A549 (cell line): ENCODE measurements at regions of chr7 and their contacts with region 1.

Region 1: DNA sequence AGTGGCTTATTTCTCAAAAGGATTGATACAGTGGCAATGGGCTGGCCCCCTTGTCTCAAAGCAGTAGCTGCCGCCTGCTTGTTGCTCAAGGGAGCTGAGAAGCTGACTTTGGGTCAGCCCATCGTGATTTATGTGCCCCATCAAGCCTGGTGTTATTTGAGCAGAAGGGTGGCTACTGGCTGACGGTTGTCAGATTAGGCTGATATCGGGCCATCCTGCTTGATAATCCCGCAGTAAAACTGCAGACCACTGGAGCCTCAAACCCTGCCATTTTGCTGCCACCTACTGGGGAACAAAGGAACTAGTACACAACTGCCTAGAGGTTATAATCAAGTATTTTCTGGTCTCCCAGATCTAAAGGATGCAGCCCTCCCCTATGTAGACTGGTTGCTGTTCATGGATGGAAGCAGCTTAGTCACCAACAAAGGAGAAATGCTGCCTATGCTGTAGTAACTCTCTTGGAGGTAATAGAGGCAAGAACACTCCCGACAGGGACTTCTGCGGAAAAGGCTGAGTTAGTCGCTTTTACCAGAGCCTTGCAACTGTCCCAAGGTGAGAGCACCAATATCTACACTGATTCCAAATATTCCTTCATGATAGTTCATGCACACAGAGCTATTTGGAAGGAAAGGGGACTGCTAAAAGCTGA is 65.9 kb upstream of the ZNF92 start:
- DNase-seq: peak; percentile 49 to 67
- ATAC-seq: peak; percentile 83 to 97
- H3K4me3 ChIP-seq: no peak overlapping the region
- H3K27ac ChIP-seq: no peak overlapping the region
- H3K4me1 ChIP-seq: no peaks in the 10 kb centered on the region
- CTCF ChIP-seq: peak; percentile 84
- EP300 ChIP-seq: no peak
- POLR2A ChIP-seq: no peak
- RAD21 ChIP-seq: peak; percentile 87 to 93

Region 2: DNA sequence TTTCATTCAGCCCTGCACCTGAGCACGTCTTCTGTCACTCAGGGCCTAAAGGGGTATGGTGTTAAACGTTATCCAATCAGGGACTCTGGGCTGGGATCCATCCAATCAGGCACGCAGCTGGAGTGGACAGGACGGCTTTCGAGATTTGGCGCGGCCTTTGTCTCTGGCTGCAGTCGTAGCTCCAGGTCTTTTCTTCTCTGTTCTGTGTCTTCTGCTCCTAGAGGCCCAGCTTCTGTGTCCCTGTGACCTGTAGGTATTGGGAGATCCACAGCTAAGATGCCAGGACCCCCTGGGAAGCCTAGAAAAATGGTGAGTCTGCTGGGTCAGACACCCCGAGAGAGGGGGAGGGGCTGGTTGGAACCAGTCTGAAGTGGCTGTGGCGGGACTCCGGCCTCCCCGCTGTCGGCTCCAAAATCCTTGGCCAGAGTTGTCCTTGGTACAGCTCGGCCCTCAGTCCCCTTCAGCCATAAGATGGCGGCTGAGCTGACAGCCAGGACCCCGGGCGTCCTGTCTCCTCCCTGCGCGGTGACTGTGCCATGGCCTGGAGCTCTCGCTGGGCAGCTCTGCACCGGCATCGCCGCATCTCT is 733.1 kb before region 1 on chr7:
- CTCF ChIA-PET with region 1: no interaction called
- POLR2A ChIA-PET with region 1: no interaction called
- DNase-seq: no peak
- ATAC-seq: no peak
- H3K4me3 ChIP-seq: no peak overlapping the region
- H3K27ac ChIP-seq: no peak overlapping the region
- H3K4me1 ChIP-seq: no peaks in the 10 kb centered on the region
- CTCF ChIP-seq: no peak
- EP300 ChIP-seq: no peak
- POLR2A ChIP-seq: no peak
- RAD21 ChIP-seq: no peak

Region 3: DNA sequence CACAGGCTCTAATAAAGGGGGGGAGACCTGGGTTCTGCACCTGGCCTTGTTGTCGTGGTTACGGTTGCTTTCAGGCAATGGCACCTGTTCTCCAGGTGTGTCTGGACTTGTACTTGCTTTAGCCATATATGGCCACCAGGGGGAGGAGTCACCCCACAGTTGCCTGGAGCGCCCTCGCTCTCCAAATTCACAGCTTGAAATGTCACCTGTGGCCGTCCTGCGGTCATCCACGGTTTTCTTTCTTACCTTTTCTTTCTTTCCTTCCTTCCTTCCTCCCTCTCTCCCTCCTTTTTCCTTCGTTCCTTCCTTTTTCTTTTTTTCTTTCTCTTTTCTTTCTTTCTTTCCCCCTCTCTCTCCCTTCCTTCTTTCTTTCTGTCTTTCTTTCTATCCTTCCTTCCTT is 91.3 kb before region 1 on chr7:
- CTCF ChIA-PET with region 1: interaction called, 20 read pairs
- POLR2A ChIA-PET with region 1: no interaction called
- DNase-seq: peak in 1 of 2 experiments; percentile 64
- ATAC-seq: peak; percentile 58 to 86; a peak in 4 of 6 replicates
- H3K4me3 ChIP-seq: no peak overlapping the region
- H3K27ac ChIP-seq: no peak overlapping the region
- H3K4me1 ChIP-seq: no peaks in the 10 kb centered on the region
- CTCF ChIP-seq: peak; percentile 71
- EP300 ChIP-seq: no peak
- POLR2A ChIP-seq: no peak
- RAD21 ChIP-seq: peak; percentile 87 to 91

Region 4: GRCh38 chr7:65250697-65251395 is 56.9 kb before region 1 on chr7:
- CTCF ChIA-PET with region 1: interaction called, 10 read pairs
- POLR2A ChIA-PET with region 1: no interaction called
- DNase-seq: no peak
- ATAC-seq: no peak
- H3K4me3 ChIP-seq: no peak overlapping the region
- H3K27ac ChIP-seq: no peak overlapping the region
- H3K4me1 ChIP-seq: no peaks in the 10 kb centered on the region
- CTCF ChIP-seq: no peak
- EP300 ChIP-seq: no peak
- POLR2A ChIP-seq: no peak
- RAD21 ChIP-seq: no peak

Region 5: GRCh38 chr7:65325793-65326432 is 18.1 kb after region 1 on chr7:
- CTCF ChIA-PET with region 1: interaction called, 14 read pairs
- POLR2A ChIA-PET with region 1: no interaction called
- DNase-seq: no peak
- ATAC-seq: no peak
- H3K4me3 ChIP-seq: no peak overlapping the region
- H3K27ac ChIP-seq: no peak overlapping the region
- H3K4me1 ChIP-seq: no peaks in the 10 kb centered on the region
- CTCF ChIP-seq: no peak
- EP300 ChIP-seq: no peak
- POLR2A ChIP-seq: no peak
- RAD21 ChIP-seq: no peak

Region 6: DNA sequence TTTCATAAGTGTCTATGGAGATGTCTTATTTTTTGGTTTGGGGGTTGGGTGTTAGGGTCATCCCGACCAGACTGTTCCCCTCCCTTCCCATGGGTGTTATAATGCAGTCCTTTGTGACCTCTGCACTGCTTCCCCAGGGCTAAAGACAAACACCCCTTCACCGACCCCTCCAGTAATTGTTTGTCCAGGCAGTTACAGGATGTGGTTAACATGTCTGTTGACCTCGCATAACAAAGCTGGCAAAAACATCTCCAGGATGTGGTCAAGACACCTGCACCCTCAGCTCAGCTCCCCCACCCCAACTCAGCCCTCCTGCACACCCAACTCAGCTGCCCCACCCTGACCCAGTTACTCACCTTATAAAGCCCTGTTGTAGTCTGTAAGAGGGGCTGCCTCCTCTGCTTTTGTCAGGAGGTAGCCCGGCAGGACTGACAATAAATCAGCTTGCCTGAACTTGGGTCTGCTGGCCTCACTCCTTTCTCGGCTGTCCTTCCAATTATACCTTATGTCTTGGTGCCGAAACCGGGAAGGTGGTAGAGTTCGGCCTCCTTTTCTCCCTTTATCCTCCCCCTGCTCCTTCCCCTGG is 168.1 kb after region 1 on chr7:
- CTCF ChIA-PET with region 1: no interaction called
- POLR2A ChIA-PET with region 1: no interaction called
- DNase-seq: no peak
- ATAC-seq: no peak
- H3K4me3 ChIP-seq: no peak overlapping the region
- H3K27ac ChIP-seq: no peak overlapping the region
- H3K4me1 ChIP-seq: no peaks in the 10 kb centered on the region
- CTCF ChIP-seq: no peak
- EP300 ChIP-seq: no peak
- POLR2A ChIP-seq: no peak
- RAD21 ChIP-seq: no peak